ENCODE measurements at regions of chr10 and their contacts with region 1.

Region 1: DNA sequence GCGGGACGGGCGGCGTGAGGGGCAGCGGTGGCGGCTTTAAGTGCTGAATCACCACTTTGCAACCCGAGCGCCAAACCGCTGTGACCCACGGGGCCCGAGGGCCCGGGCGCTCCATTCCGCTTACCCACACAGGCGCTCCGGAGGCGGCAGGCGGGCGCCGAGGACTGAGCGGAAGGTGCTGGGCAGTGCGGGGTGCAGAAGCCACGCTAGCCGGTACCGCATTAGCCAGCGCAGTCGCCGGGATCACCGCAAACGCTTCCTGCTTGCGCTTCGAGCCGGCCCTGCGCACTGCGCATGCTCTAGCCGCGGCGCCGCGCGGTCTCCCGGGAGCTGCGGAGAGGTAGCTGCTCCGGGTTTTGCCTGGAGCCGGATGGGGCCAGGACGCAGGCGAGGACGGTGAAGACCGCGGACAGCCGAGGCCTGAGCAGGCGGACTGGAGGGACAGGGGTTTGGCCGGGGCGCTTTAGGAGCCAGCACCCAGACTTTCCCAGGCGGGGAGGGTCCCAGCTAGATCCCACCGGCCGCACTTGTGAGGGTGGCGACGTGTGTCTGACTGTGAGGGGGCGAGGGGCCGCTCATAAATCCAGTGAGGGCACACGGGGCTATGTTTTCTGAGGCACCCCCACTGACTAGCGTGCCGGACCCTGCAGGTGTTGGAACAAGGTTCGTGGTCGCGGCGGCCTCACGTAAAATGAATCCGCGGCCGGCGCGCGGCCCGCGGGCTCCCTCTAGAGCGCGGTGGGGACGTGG is at the start of gene IDE:
- DNase-seq: peak; percentile 45
- ATAC-seq: peak; percentile 82
- H3K4me3 ChIP-seq: peak within 1 kb of the TSS; percentile 82
- H3K27ac ChIP-seq: peak within 1 kb of the TSS; percentile 92
- H3K4me1 ChIP-seq: peaks cover 4% of the 10 kb centered on the region
- H3K27me3 ChIP-seq: no peaks in the 10 kb centered on the region
- CTCF ChIP-seq: peak; percentile 94 to 96 (median 94)
- EP300 ChIP-seq: no peak
- POLR2A ChIP-seq: peak; percentile 93
- RAD21 ChIP-seq: peak; percentile 88
- polyA plus RNA-seq, gene IDE: 11.6 to 13.1 TPM

Region 2: GRCh38 chr10:91043173-91043910 is 1530.6 kb before region 1 on chr10:
- CTCF ChIA-PET with region 1: no interaction called
- POLR2A ChIA-PET with region 1: no interaction called
- RAD21 ChIA-PET with region 1: no interaction called
- SMC1A ChIA-PET with region 1: no interaction called
- in situ Hi-C with region 1: no loop called
- intact Hi-C with region 1: no loop called
- DNase-seq: peak; percentile 3
- ATAC-seq: peak; percentile 66
- H3K4me3 ChIP-seq: no peak overlapping the region
- H3K27ac ChIP-seq: no peak overlapping the region
- H3K4me1 ChIP-seq: peaks cover under 1% of the 10 kb centered on the region; the same call in 1 of the 2 replicates
- H3K27me3 ChIP-seq: no peaks in the 10 kb centered on the region
- CTCF ChIP-seq: peak; percentile 18 to 51 (median 28); a peak in 3 of 6 replicates
- EP300 ChIP-seq: no peak
- POLR2A ChIP-seq: no peak
- RAD21 ChIP-seq: peak; percentile 50

Region 3: GRCh38 chr10:92527716-92528115 is 46.3 kb before region 1 on chr10:
- CTCF ChIA-PET with region 1: interaction called, 15 read pairs
- POLR2A ChIA-PET with region 1: no interaction called
- RAD21 ChIA-PET with region 1: interaction called, 4 read pairs
- SMC1A ChIA-PET with region 1: interaction called, 4 read pairs
- in situ Hi-C with region 1: no loop called
- intact Hi-C with region 1: no loop called
- DNase-seq: no peak
- ATAC-seq: no peak
- H3K4me3 ChIP-seq: no peak overlapping the region
- H3K27ac ChIP-seq: no peak overlapping the region
- H3K4me1 ChIP-seq: no peaks in the 10 kb centered on the region
- H3K27me3 ChIP-seq: no peaks in the 10 kb centered on the region
- CTCF ChIP-seq: no peak
- EP300 ChIP-seq: no peak
- POLR2A ChIP-seq: no peak
- RAD21 ChIP-seq: no peak

Region 4: DNA sequence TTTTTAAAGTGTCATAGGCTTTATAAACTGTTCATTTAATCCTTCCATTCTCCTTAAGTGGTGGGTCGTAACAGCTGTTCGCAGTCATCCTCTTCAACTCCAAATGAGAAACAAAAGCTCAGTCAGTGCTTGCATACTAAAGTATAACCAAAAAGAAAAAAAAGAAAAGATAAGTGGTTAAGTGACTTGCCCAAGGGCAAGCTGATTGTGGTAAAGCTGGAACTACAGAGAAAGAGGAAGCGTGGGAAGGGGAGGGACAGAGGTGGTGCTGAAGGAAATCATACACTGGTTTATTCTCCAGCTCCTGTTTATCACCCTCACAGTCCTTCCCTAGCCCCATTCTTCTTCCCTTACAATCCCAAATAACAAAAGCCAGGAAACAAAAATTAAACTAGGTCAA is 29.7 kb before region 1 on chr10:
- CTCF ChIA-PET with region 1: interaction called, 14 read pairs
- POLR2A ChIA-PET with region 1: interaction called, 3 read pairs
- RAD21 ChIA-PET with region 1: interaction called, 5 read pairs
- SMC1A ChIA-PET with region 1: interaction called, 5 read pairs
- in situ Hi-C with region 1: no loop called
- intact Hi-C with region 1: no loop called
- DNase-seq: peak; percentile 35
- ATAC-seq: peak; percentile 78
- H3K4me3 ChIP-seq: no peak overlapping the region
- H3K27ac ChIP-seq: no peak overlapping the region
- H3K4me1 ChIP-seq: peaks cover 8% of the 10 kb centered on the region
- H3K27me3 ChIP-seq: no peaks in the 10 kb centered on the region
- CTCF ChIP-seq: no peak
- EP300 ChIP-seq: no peak
- POLR2A ChIP-seq: no peak
- RAD21 ChIP-seq: no peak

Region 5: GRCh38 chr10:92552310-92552709 is 21.7 kb before region 1 on chr10:
- CTCF ChIA-PET with region 1: interaction called, 21 read pairs
- POLR2A ChIA-PET with region 1: interaction called, 3 read pairs
- RAD21 ChIA-PET with region 1: no interaction called
- SMC1A ChIA-PET with region 1: interaction called, 4 read pairs
- in situ Hi-C with region 1: no loop called
- intact Hi-C with region 1: no loop called
- DNase-seq: no peak
- ATAC-seq: peak; percentile 72
- H3K4me3 ChIP-seq: no peak overlapping the region
- H3K27ac ChIP-seq: no peak overlapping the region
- H3K4me1 ChIP-seq: peaks cover 15% of the 10 kb centered on the region
- H3K27me3 ChIP-seq: no peaks in the 10 kb centered on the region
- CTCF ChIP-seq: peak in 2 of 3 experiments; percentile 35 to 40; a peak in 3 of 6 replicates
- EP300 ChIP-seq: no peak
- POLR2A ChIP-seq: no peak
- RAD21 ChIP-seq: no peak

Region 6: DNA sequence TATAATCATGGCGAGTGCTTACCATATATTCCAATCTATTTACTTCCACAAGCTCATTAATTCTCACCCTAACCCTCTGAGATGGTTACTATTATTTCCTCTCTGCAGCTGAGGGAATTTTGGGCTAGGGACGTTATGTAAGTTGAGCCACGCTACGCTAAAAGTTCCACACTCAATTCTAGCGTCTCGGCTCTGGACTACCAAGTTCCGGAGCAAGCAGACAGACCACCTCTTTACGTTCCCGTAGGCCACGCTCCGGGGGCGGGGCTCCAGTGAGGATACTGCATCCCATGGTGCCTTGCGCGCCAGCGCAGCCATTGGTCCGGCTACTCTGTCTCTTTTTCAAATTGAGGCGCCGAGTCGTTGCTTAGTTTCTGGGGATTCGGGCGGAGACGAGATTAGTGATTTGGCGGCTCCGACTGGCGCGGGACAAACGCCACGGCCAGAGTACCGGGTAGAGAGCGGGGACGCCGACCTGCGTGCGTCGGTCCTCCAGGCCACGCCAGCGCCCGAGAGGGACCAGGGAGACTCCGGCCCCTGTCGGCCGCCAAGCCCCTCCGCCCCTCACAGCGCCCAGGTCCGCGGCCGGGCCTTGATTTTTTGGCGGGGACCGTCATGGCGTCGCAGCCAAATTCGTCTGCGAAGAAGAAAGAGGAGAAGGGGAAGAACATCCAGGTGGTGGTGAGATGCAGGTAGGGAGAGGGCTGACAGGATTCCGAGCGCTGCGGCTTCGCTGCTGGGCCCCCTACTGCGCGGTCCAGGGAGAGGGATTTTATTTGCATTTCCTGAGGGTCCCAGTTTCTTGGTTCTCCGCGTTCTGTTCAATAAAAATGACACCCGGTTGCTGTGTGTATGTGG is 19.0 kb after region 1 on chr10 and contains the start of gene KIF11:
- CTCF ChIA-PET with region 1: interaction called, 8 read pairs
- POLR2A ChIA-PET with region 1: interaction called, 9 read pairs
- RAD21 ChIA-PET with region 1: interaction called, 12 read pairs
- SMC1A ChIA-PET with region 1: interaction called, 16 read pairs
- in situ Hi-C with region 1: no loop called
- intact Hi-C with region 1: no loop called
- DNase-seq: peak; percentile 88
- ATAC-seq: peak; percentile 81
- H3K4me3 ChIP-seq: peak within 1 kb of the TSS; percentile 88
- H3K27ac ChIP-seq: peak within 1 kb of the TSS; percentile 95
- H3K4me1 ChIP-seq: peaks cover 7% of the 10 kb centered on the region
- H3K27me3 ChIP-seq: no peaks in the 10 kb centered on the region
- CTCF ChIP-seq: no peak
- EP300 ChIP-seq: peak in 1 of 2 experiments; percentile 10; a peak in 1 of 4 replicates
- POLR2A ChIP-seq: peak; percentile 88
- RAD21 ChIP-seq: no peak
- polyA plus RNA-seq, gene KIF11: 14.1 to 17.9 TPM

Region 7: DNA sequence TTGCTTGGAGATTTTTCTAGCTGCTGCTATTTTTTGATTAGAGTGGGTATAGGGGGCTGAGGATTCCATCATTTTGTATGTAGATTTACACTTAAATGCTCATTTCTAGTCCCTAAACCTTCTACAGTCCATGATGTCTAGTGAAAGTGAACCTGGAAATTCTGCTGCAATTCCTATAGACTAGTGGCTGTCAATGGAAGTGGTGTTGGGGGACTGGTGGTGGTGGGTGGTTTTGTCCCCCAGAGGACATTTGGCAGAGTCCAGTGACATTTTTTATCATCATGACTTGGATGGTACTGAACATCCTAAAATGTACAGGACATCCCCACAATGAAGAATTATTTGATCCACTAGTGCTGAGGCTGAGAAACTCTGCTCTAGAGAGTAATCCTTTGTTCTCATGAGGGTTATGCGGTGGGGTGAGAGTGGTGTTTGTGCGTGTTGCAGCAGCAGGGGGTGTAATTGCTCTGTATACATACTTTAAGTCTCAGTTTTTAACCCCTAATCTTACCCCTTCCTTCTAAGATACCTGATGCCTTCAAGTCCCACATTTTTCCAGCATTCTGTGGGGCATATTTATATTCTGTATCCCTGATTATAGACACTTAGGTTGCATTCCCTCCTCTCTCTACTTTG is 54.0 kb after region 1 on chr10:
- CTCF ChIA-PET with region 1: no interaction called
- POLR2A ChIA-PET with region 1: no interaction called
- RAD21 ChIA-PET with region 1: no interaction called
- SMC1A ChIA-PET with region 1: no interaction called
- in situ Hi-C with region 1: no loop called
- intact Hi-C with region 1: no loop called
- DNase-seq: no peak
- ATAC-seq: no peak
- H3K4me3 ChIP-seq: no peak overlapping the region
- H3K27ac ChIP-seq: no peak overlapping the region
- H3K4me1 ChIP-seq: no peaks in the 10 kb centered on the region
- H3K27me3 ChIP-seq: no peaks in the 10 kb centered on the region
- CTCF ChIP-seq: peak in 1 of 3 experiments; percentile 10; a peak in 1 of 6 replicates
- EP300 ChIP-seq: no peak
- POLR2A ChIP-seq: no peak
- RAD21 ChIP-seq: no peak

Region 8: DNA sequence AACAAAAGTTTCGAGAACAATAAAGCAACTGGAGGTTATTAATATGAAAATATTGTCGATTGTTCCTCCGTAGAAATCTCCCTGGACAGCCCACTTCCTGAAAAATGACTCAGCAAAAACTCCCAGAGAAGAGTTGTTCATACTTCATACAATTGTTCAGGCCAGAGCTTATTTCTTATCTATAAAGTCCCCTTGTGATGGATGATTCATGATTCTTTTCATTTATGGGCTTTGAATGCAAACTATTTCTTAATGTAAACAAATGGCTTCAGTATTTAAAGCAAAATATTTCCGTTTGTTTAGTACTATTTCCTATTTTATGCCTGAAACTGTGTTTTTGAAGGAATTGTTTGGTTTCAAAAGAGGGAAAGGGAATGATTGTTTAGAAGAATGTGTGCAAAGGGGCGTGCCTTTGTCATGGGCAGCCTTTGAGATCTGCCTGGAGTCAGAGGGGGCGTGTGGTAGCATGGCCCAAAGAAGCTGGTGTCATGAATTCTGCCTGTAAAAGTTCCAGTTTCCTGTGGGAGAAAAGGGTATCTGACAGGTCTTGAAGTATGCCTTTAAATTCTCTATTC is 248.2 kb after region 1 on chr10:
- CTCF ChIA-PET with region 1: no interaction called
- POLR2A ChIA-PET with region 1: no interaction called
- RAD21 ChIA-PET with region 1: no interaction called
- SMC1A ChIA-PET with region 1: no interaction called
- in situ Hi-C with region 1: no loop called
- intact Hi-C with region 1: no loop called
- DNase-seq: no peak
- ATAC-seq: peak; percentile 66
- H3K4me3 ChIP-seq: no peak overlapping the region
- H3K27ac ChIP-seq: no peak overlapping the region
- H3K4me1 ChIP-seq: no peaks in the 10 kb centered on the region
- H3K27me3 ChIP-seq: peaks cover 0 to 4% of the 10 kb centered on the region in 2 experiments; a peak in 1 of 4 replicates
- CTCF ChIP-seq: no peak
- EP300 ChIP-seq: no peak
- POLR2A ChIP-seq: no peak
- RAD21 ChIP-seq: no peak